ENCODE measurements at regions of chr10 and their contacts with region 1.

Region 1: GRCh38 chr10:72319416-72320254 is 35.1 kb downstream of the DNAJB12 start:
- DNase-seq: peak; percentile 77 to 95 (median 88)
- ATAC-seq: peak; percentile 65
- H3K4me3 ChIP-seq: peak overlapping the region; percentile 52
- H3K4me3 Mint-ChIP-seq: peak overlapping the region; percentile 57
- H3K27ac ChIP-seq: peak overlapping the region; percentile 86 to 95
- H3K27ac Mint-ChIP-seq: peak overlapping the region; percentile 91
- H3K4me1 ChIP-seq: peaks cover 93% of the 10 kb centered on the region
- H3K4me1 Mint-ChIP-seq: peaks cover 89% of the 10 kb centered on the region
- H3K27me3 ChIP-seq: no peaks in the 10 kb centered on the region
- H3K27me3 Mint-ChIP-seq: no peaks in the 10 kb centered on the region
- CTCF ChIP-seq: no peak

Region 2: GRCh38 chr10:72097448-72098300 is 222.0 kb before region 1 on chr10:
- CTCF ChIA-PET with region 1: no interaction called
- POLR2A ChIA-PET with region 1: no interaction called
- intact Hi-C with region 1: no loop called
- DNase-seq: no peak
- ATAC-seq: no peak
- H3K4me3 ChIP-seq: no peak overlapping the region
- H3K4me3 Mint-ChIP-seq: no peak overlapping the region
- H3K27ac ChIP-seq: no peak overlapping the region
- H3K27ac Mint-ChIP-seq: no peak overlapping the region
- H3K4me1 ChIP-seq: peaks cover 16% of the 10 kb centered on the region
- H3K4me1 Mint-ChIP-seq: peaks cover 55% of the 10 kb centered on the region
- H3K27me3 ChIP-seq: no peaks in the 10 kb centered on the region
- H3K27me3 Mint-ChIP-seq: no peaks in the 10 kb centered on the region
- CTCF ChIP-seq: no peak

Region 3: DNA sequence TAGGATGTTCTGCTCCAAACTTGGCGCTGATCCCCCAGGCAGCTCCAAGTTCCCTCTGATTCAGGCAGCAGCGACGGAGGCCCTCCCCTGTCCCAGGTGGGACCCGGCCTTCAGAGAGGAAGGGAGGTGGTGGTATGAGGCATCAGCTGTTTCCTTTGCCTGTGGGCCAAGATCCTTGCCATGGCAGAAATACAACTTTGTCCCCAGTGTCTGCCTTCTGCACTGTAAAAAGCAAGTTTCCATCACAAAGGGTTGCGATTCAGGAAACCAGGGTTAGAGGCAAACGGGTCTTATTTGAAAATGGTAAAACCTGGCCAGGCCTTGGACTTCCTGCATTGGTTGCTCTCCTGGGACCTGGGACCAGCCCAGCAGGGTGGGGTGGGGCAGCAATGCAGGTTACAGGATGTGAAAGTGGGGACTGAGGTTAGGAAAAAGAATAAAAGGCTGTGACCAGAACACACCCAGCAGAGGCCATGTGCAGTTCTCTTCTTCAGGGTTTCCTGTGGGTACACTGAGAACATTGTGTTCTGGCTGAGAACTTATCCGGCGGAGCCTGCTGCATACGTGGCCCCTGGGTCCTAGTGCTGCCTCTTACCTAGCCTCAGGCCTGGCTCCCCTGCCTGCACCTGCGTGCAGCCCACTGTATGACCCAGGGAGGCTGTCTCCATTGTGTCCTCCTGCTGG is 71.0 kb before region 1 on chr10:
- CTCF ChIA-PET with region 1: no interaction called
- POLR2A ChIA-PET with region 1: interaction called, 22 read pairs
- intact Hi-C with region 1: no loop called
- DNase-seq: peak; percentile 54 to 96 (median 64)
- ATAC-seq: peak; percentile 87
- H3K4me3 ChIP-seq: peak overlapping the region; percentile 31
- H3K4me3 Mint-ChIP-seq: peak overlapping the region; percentile 85
- H3K27ac ChIP-seq: peak overlapping the region; percentile 20 to 62
- H3K27ac Mint-ChIP-seq: peak overlapping the region; percentile 96
- H3K4me1 ChIP-seq: peaks cover 99% of the 10 kb centered on the region
- H3K4me1 Mint-ChIP-seq: peaks cover 86% of the 10 kb centered on the region
- H3K27me3 ChIP-seq: no peaks in the 10 kb centered on the region
- H3K27me3 Mint-ChIP-seq: no peaks in the 10 kb centered on the region
- CTCF ChIP-seq: no peak

Region 4: DNA sequence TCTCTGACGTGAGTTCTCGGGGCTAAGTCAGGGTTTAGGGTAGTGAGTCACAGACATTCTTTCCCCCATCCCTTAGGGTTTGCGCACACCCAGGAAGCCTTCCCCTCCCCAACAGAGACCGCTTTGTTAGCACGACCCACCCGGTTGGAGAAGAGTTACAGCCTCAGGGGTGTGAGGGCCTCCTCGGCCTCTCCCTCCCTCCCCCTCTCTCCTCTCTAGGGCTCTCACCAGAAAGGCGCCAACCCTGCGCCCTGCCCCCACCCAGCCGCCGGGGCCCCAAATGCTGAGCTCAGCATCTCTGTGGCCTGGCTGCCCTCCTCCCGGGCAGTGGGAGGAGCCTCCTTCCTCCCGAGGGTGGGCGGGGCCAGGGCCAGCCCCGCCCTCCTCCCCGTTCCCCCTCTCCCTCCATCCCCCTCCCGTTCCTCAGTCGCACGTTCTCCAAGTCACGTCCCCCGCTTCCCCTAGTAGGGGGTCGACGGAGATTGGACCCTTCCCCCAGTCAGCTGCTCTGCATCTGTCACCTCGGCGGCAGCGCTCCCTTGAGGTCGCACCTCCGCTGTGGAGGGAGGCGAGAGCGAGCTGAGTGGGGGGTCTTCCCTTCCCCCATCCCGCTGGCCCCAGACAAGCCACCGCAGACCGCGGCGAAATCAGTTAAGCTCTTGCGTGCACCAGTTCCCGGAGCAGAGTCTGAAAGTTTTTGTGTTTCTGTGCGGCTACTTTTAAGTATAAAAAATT is 58.9 kb before region 1 on chr10:
- CTCF ChIA-PET with region 1: no interaction called
- POLR2A ChIA-PET with region 1: interaction called, 18 read pairs
- intact Hi-C with region 1: no loop called
- DNase-seq: peak; percentile 64 to 91 (median 77)
- ATAC-seq: peak; percentile 76
- H3K4me3 ChIP-seq: peak overlapping the region; percentile 77
- H3K4me3 Mint-ChIP-seq: peak overlapping the region; percentile 84
- H3K27ac ChIP-seq: peak overlapping the region; percentile 68 to 80
- H3K27ac Mint-ChIP-seq: peak overlapping the region; percentile 85
- H3K4me1 ChIP-seq: peaks cover 80% of the 10 kb centered on the region
- H3K4me1 Mint-ChIP-seq: peaks cover 72% of the 10 kb centered on the region
- H3K27me3 ChIP-seq: no peaks in the 10 kb centered on the region
- H3K27me3 Mint-ChIP-seq: no peaks in the 10 kb centered on the region
- CTCF ChIP-seq: no peak

Region 5: GRCh38 chr10:72292223-72292691 is 27.4 kb before region 1 on chr10:
- CTCF ChIA-PET with region 1: interaction called, 4 read pairs
- POLR2A ChIA-PET with region 1: interaction called, 75 read pairs
- intact Hi-C with region 1: loop called in 1 of 2 experiments (anchors 1 kb)
- DNase-seq: peak in 2 of 14 experiments; percentile 33 to 35
- ATAC-seq: no peak
- H3K4me3 ChIP-seq: no peak overlapping the region
- H3K4me3 Mint-ChIP-seq: peak overlapping the region; percentile 27
- H3K27ac ChIP-seq: no peak overlapping the region
- H3K27ac Mint-ChIP-seq: peak overlapping the region; percentile 52
- H3K4me1 ChIP-seq: peaks cover 67% of the 10 kb centered on the region
- H3K4me1 Mint-ChIP-seq: peaks cover 62% of the 10 kb centered on the region
- H3K27me3 ChIP-seq: no peaks in the 10 kb centered on the region
- H3K27me3 Mint-ChIP-seq: no peaks in the 10 kb centered on the region
- CTCF ChIP-seq: no peak

Region 6: DNA sequence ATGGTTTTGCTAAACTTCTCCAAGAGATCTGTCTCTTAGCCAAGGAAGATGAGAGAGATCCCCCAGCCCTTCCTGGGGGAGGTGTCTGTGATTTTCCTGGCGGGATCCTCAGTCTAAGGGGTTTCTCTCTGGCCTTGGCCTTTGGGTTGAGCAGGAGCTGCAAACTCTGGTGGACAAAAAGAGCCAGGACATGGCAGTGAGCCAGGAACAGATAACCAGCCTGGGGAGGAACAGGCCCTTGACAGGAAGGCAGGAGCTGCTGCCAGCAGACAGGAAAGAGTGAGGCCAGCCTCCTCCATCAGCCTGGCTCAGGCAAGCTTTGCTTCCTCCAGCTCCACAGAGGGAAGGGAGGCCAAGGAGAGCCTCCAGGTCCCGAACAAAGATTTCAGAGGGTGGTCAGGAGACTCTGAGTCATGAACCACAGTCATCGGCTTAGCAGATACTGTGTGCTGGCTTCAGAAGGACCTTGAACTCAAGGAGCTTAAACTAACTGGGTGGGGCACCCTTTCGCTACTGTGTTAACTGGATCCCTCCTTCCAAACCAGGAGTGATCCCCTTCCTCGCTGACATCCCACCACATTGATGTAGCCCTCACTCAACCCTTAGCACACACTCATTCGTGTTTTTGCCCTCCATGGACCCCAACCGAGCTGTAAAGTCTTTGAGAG is 11.2 kb before region 1 on chr10:
- CTCF ChIA-PET with region 1: interaction called, 5 read pairs
- POLR2A ChIA-PET with region 1: interaction called, 19 read pairs
- intact Hi-C with region 1: no loop called
- DNase-seq: peak in 4 of 14 experiments; percentile 39 to 70 (median 56)
- ATAC-seq: no peak
- H3K4me3 ChIP-seq: no peak overlapping the region
- H3K4me3 Mint-ChIP-seq: no peak overlapping the region
- H3K27ac ChIP-seq: no peak overlapping the region
- H3K27ac Mint-ChIP-seq: peak overlapping the region; percentile 69
- H3K4me1 ChIP-seq: peaks cover 64% of the 10 kb centered on the region
- H3K4me1 Mint-ChIP-seq: peaks cover 67% of the 10 kb centered on the region
- H3K27me3 ChIP-seq: no peaks in the 10 kb centered on the region
- H3K27me3 Mint-ChIP-seq: no peaks in the 10 kb centered on the region
- CTCF ChIP-seq: no peak

Region 7: DNA sequence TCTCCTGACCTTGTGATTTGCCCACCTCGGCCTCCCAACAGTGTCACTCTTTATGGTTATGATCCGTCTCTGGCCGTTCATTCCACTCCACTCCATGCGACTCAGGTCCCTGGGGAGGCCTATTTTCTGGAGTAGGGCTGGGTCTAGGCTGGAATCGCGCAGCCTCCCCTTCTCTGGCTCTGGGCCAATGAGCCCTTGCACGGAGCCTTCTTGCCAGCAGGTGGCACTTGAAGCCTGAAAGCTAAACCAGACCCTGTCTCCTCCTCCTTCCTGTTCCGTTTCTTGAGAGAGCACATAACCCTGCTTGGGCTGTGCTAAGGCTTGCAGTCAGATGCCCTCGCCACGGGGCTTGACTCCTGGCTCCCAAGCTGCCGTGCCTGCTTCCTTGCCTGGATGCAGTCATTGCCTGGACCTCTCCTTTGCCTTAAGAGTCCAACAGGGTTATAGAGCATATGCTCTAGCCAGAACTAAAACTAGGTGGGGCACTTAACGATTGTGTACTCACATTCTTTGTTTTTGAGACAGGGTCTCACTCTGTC is 44.7 kb after region 1 on chr10:
- CTCF ChIA-PET with region 1: no interaction called
- POLR2A ChIA-PET with region 1: no interaction called
- intact Hi-C with region 1: no loop called
- DNase-seq: peak; percentile 78 to 92 (median 82)
- ATAC-seq: peak; percentile 100
- H3K4me3 ChIP-seq: peak overlapping the region; percentile 24
- H3K4me3 Mint-ChIP-seq: no peak overlapping the region
- H3K27ac ChIP-seq: peak overlapping the region in 1 of 2 donors; percentile 54
- H3K27ac Mint-ChIP-seq: peak overlapping the region; percentile 74
- H3K4me1 ChIP-seq: peaks cover 14% of the 10 kb centered on the region
- H3K4me1 Mint-ChIP-seq: peaks cover 17% of the 10 kb centered on the region
- H3K27me3 ChIP-seq: no peaks in the 10 kb centered on the region
- H3K27me3 Mint-ChIP-seq: no peaks in the 10 kb centered on the region
- CTCF ChIP-seq: peak; percentile 80

Region 8: DNA sequence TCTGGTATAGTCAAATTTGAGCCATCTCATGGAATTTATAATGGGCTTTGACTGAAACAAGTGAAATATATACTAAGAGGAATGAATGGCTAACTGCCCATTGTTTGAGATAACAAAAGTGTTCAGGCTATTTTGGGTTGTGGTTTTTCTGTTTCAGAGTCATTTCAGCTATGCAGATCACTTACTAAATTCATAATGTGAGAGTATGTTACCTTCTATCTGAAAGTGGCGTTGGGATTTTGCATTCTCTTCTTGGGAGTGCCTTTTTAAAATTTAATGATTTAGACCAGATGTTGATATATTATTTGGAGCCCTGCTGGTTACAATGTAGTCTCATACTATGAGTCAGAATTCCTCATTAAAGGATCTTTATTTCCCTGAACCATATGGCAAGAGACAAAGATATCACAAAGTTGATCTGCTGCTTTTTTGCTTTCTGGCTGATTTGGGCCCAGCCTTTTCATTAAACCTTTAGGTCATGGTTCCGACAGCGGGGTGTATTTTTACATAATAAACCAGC is 1688.6 kb after region 1 on chr10:
- CTCF ChIA-PET with region 1: no interaction called
- POLR2A ChIA-PET with region 1: no interaction called
- intact Hi-C with region 1: no loop called
- DNase-seq: no peak
- ATAC-seq: no peak
- H3K4me3 ChIP-seq: no peak overlapping the region
- H3K4me3 Mint-ChIP-seq: no peak overlapping the region
- H3K27ac ChIP-seq: no peak overlapping the region
- H3K27ac Mint-ChIP-seq: peak overlapping the region; percentile 59
- H3K4me1 ChIP-seq: peaks cover 28% of the 10 kb centered on the region
- H3K4me1 Mint-ChIP-seq: peaks cover 66% of the 10 kb centered on the region
- H3K27me3 ChIP-seq: no peaks in the 10 kb centered on the region
- H3K27me3 Mint-ChIP-seq: no peaks in the 10 kb centered on the region
- CTCF ChIP-seq: no peak

Measured in CD4-positive, alpha-beta T cell (primary cell).